Activated naive CD4-positive, alpha-beta T cell treated with anti-CD3 and anti-CD28 coated beads for 36 hours (primary cell): ENCODE measurements at regions of chr10 and their contacts with region 1.

Region 1: GRCh38 chr10:96831867-96832720 is at the start of gene LCOR:
- DNase-seq: peak; percentile 83
- H3K4me3 Mint-ChIP-seq: peak within 1 kb of the TSS; percentile 88
- H3K27ac Mint-ChIP-seq: peak within 1 kb of the TSS; percentile 94
- H3K4me1 Mint-ChIP-seq: peaks cover 43% of the 10 kb centered on the region
- H3K27me3 Mint-ChIP-seq: no peaks in the 10 kb centered on the region
- total RNA-seq, gene LCOR: 18.1 to 22.9 TPM

Region 2: DNA sequence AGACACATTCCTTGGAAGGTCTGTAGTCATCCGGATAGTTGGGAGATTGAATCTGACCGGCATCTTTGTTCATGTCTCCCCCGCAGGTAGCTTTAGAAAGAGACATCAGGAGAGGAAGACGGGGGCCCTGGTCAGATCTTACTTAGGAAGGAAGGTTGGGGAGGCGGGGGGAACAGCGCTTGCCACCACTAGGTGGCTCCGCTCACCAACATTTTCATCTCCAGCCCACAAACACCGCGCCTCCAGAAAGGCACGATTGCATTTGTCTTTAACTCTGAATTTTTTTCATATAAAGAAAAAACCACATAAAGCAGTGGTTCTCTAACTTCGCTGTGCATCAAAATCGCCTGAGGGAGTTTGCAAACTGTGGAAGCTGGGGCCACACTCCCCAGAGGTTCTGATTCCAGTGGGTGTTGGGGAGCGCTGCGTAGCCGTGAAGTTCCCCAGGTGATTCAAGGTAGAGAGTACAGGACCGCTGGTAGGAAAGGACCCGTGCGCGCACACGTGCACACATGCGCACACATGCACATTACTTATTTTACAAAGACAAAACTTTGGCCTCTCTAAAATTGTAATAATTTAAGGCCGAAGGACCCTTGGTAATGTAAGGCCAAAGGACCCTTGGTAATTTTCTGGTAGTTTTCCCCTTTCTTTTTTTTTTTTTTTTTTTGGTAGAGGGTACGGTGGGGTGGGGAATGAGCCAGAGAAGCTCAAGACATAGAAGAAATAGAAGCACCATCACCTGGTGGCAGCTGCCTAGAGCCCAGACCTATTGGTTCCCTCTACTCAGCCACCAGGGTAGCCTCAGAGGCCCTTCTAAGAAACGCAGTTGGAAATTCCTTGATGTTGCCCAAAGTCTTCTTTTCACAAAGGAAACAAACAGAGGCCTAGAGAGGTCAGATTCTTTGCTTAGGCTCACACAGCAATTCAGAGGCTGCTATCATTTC is 435.9 kb before region 1 on chr10:
- CTCF ChIA-PET with region 1: no interaction called
- intact Hi-C with region 1: loop called (anchors 1 kb)
- DNase-seq: peak; percentile 75
- H3K4me3 Mint-ChIP-seq: peak overlapping the region; percentile 28
- H3K27ac Mint-ChIP-seq: no peak overlapping the region
- H3K4me1 Mint-ChIP-seq: no peaks in the 10 kb centered on the region
- H3K27me3 Mint-ChIP-seq: peaks cover 15% of the 10 kb centered on the region

Region 3: GRCh38 chr10:96642973-96643372 is 189.1 kb before region 1 on chr10:
- CTCF ChIA-PET with region 1: interaction called, 14 read pairs
- intact Hi-C with region 1: loop called (anchors 1 kb)
- DNase-seq: peak; percentile 92
- H3K4me3 Mint-ChIP-seq: no peak overlapping the region
- H3K27ac Mint-ChIP-seq: no peak overlapping the region
- H3K4me1 Mint-ChIP-seq: peaks cover 14% of the 10 kb centered on the region
- H3K27me3 Mint-ChIP-seq: no peaks in the 10 kb centered on the region

Region 4: GRCh38 chr10:96842896-96843723 is 11.0 kb after region 1 on chr10:
- CTCF ChIA-PET with region 1: interaction called, 5 read pairs
- intact Hi-C with region 1: loop called (anchors 1 kb)
- DNase-seq: no peak
- H3K4me3 Mint-ChIP-seq: no peak overlapping the region
- H3K27ac Mint-ChIP-seq: no peak overlapping the region
- H3K4me1 Mint-ChIP-seq: peaks cover 68% of the 10 kb centered on the region
- H3K27me3 Mint-ChIP-seq: no peaks in the 10 kb centered on the region

Region 5: GRCh38 chr10:96910488-96911395 is 78.6 kb after region 1 on chr10:
- CTCF ChIA-PET with region 1: interaction called, 4 read pairs
- intact Hi-C with region 1: loop called (anchors 2 kb)
- DNase-seq: peak; percentile 29
- H3K4me3 Mint-ChIP-seq: no peak overlapping the region
- H3K27ac Mint-ChIP-seq: no peak overlapping the region
- H3K4me1 Mint-ChIP-seq: peaks cover 20% of the 10 kb centered on the region
- H3K27me3 Mint-ChIP-seq: no peaks in the 10 kb centered on the region

Region 6: DNA sequence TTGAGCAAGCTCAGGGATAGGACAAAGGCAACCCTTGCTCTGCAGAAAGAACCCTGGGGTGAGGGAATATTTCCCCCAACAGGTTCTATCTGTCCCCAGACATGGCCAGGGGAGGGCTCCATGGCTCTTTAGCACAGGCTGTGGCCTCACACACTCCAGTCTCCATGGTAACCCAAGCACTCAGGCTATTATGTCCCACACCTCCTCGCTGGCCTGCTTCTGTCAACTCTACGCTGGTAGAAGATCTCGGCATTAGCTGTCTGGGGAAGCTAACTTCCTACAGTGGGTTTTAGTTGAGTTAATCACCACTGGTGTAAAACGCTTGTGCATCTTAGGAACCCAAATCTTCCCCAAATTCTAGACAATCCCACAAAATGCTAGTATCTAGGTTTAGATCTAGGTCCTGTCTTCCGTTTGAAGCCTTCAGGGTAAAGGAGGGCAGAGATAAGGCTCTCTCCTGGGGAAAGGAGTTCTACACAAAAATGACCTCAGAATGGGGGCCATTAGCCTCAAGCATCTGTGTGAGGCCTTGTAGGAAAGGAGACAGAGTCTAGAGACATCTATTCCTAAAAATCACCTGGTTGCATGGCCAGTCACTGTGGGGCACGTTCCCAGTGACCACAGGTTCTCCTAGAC is 390.4 kb after region 1 on chr10:
- CTCF ChIA-PET with region 1: no interaction called
- intact Hi-C with region 1: loop called (anchors 2 kb)
- DNase-seq: no peak
- H3K4me3 Mint-ChIP-seq: no peak overlapping the region
- H3K27ac Mint-ChIP-seq: no peak overlapping the region
- H3K4me1 Mint-ChIP-seq: peaks cover 24% of the 10 kb centered on the region
- H3K27me3 Mint-ChIP-seq: no peaks in the 10 kb centered on the region

Region 7: GRCh38 chr10:97412891-97413304 is 580.8 kb after region 1 on chr10:
- CTCF ChIA-PET with region 1: no interaction called
- intact Hi-C with region 1: loop called (anchors 10 kb)
- DNase-seq: peak; percentile 88
- H3K4me3 Mint-ChIP-seq: peak overlapping the region; percentile 49
- H3K27ac Mint-ChIP-seq: peak overlapping the region; percentile 87
- H3K4me1 Mint-ChIP-seq: peaks cover 52% of the 10 kb centered on the region
- H3K27me3 Mint-ChIP-seq: no peaks in the 10 kb centered on the region

Region 8: GRCh38 chr10:97508342-97508741 is 676.2 kb after region 1 on chr10:
- CTCF ChIA-PET with region 1: no interaction called
- intact Hi-C with region 1: no loop called
- DNase-seq: no peak
- H3K4me3 Mint-ChIP-seq: no peak overlapping the region
- H3K27ac Mint-ChIP-seq: no peak overlapping the region
- H3K4me1 Mint-ChIP-seq: no peaks in the 10 kb centered on the region
- H3K27me3 Mint-ChIP-seq: no peaks in the 10 kb centered on the region